ENCODE measurements at regions of chr20 and their contacts with region 1.

Region 1: GRCh38 chr20:9978397-9979004 is 56.3 kb upstream of the ANKEF1 start:
- DNase-seq: no peak
- ATAC-seq: peak; percentile 94
- H3K4me3 ChIP-seq: no peak overlapping the region
- H3K27ac ChIP-seq: no peak overlapping the region
- H3K4me1 ChIP-seq: no peaks in the 10 kb centered on the region
- H3K27me3 ChIP-seq: no peaks in the 10 kb centered on the region

Region 2: DNA sequence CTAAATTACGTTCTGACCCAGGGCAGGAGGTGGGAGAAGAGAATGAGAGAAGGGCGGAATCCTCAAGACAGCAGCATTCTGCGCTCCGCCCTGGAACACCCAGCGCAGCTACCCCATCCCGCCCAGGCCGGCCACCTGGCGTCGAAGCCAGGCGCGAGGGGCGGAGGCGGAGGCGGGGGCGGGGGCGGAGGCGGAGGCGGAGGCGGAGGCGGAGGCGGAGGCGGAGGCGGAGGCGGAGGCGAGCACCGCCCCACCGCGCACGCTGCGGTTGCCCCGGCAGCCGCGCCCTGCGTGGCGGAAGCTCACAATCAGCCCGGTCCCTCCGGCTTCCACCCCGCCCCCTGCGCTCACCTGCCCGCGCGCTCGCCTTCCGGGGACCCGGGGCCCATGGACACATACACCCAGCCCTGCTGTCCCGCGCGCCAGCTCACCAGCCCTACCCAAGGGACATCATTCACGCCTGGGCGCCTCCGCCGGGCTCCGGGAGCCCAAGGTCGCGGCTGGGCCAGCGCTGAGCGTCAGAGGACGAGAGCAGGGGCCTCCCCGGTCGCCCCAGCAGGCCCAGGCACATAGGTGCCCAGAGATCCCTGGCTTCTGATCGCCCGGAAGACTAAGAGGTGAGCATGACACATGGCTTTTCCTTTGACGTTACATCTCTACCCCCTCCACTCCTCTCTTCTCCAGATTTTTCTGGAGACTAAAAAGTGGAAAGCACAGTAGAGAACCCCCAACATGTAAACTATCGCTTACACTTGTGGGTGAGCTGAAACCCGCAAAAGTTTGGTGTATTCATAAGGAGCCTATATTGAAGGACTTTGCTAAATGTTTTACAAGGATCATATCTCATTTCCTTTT is 56.4 kb after region 1 on chr20 and contains the start of gene ANKEF1:
- intact Hi-C with region 1: loop called in 1 of 2 experiments (anchors 5 kb)
- DNase-seq: peak; percentile 76 to 89
- ATAC-seq: peak; percentile 94
- H3K4me3 ChIP-seq: peak within 1 kb of the TSS; percentile 11 to 37
- H3K27ac ChIP-seq: no peak within 1 kb of the TSS
- H3K4me1 ChIP-seq: no peaks in the 10 kb centered on the region
- H3K27me3 ChIP-seq: no peaks in the 10 kb centered on the region
- total RNA-seq, gene ANKEF1: 1.5 to 2.3 TPM

Region 3: DNA sequence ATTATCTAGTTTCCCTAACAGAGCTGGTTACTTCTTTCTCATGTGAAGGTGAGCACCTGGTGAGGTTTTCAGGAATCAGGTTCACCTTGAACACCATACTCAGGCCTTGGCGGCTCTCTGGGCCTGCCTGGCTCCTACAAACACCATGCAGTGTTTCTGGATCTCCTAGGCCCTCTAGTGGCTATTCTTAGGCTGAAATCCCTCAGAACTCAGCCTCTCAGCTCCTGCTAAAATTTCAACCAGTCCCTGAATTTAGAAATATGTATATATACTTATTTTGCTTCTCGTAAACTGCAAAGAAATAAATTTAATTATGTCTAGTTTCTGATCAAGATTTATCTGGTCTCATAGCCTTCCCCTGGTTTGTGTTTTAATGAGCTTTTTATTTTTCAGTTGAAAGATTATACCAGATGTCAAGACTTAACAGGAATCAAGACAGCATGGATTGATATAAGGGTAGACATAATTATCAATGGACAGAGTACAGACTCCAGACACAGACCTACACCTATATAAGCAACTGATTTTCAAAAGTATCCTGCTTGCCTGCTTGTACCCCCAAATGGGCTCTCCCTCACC is 112.2 kb after region 1 on chr20:
- intact Hi-C with region 1: loop called (anchors 2 to 5 kb)
- DNase-seq: no peak
- ATAC-seq: peak; percentile 85
- H3K4me3 ChIP-seq: no peak overlapping the region
- H3K27ac ChIP-seq: no peak overlapping the region
- H3K4me1 ChIP-seq: no peaks in the 10 kb centered on the region
- H3K27me3 ChIP-seq: no peaks in the 10 kb centered on the region

Region 4: GRCh38 chr20:10219452-10219791 is 240.9 kb after region 1 on chr20:
- intact Hi-C with region 1: loop called (anchors 5 to 10 kb)
- DNase-seq: peak; percentile 85 to 96
- ATAC-seq: peak; percentile 92
- H3K4me3 ChIP-seq: peak overlapping the region; percentile 36 to 62
- H3K27ac ChIP-seq: peak overlapping the region in 1 of 2 donors; percentile 39
- H3K4me1 ChIP-seq: no peaks in the 10 kb centered on the region
- H3K27me3 ChIP-seq: peaks cover 0 to 2% of the 10 kb centered on the region in 2 donors

Region 5: GRCh38 chr20:10427060-10427692 is 448.7 kb after region 1 on chr20:
- intact Hi-C with region 1: loop called (anchors 2 to 5 kb)
- DNase-seq: peak; percentile 67 to 80
- ATAC-seq: no peak
- H3K4me3 ChIP-seq: no peak overlapping the region
- H3K27ac ChIP-seq: no peak overlapping the region
- H3K4me1 ChIP-seq: no peaks in the 10 kb centered on the region
- H3K27me3 ChIP-seq: no peaks in the 10 kb centered on the region

Region 6: DNA sequence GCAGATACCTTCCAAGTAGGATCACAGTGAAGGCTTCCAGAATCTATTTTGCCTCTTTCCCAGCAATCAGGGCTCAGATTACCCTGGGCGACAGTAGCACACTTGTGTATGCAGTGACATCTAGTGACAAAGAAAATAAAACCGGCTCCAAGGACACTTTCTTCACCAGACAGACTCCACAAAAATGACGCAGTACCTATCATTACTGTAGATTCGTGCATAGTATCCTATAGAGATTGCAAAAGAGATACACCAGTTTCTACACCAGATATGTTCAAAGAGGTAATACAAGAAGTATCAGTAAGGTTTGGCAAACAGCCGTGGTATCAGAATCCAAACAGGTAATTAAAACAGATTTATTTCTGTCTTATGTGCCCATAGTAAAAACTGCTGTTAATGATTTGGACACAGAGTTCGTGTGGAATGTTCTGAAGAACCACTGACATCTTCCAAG is 1295.7 kb after region 1 on chr20:
- intact Hi-C with region 1: loop called in 1 of 2 experiments (anchors 10 kb)
- DNase-seq: peak in 1 of 2 donors; percentile 48
- ATAC-seq: peak; percentile 86
- H3K4me3 ChIP-seq: no peak overlapping the region
- H3K27ac ChIP-seq: no peak overlapping the region
- H3K4me1 ChIP-seq: peaks cover 0 to 2% of the 10 kb centered on the region in 2 donors
- H3K27me3 ChIP-seq: no peaks in the 10 kb centered on the region

Region 7: GRCh38 chr20:11544029-11544678 is 1565.7 kb after region 1 on chr20:
- intact Hi-C with region 1: loop called (anchors 5 kb)
- DNase-seq: no peak
- ATAC-seq: peak; percentile 78
- H3K4me3 ChIP-seq: no peak overlapping the region
- H3K27ac ChIP-seq: no peak overlapping the region
- H3K4me1 ChIP-seq: no peaks in the 10 kb centered on the region
- H3K27me3 ChIP-seq: no peaks in the 10 kb centered on the region

Measured in aorta (tissue), 5 donors.